ENCODE measurements at regions of chrX and their contacts with region 1.

Region 1: GRCh38 chrX:9995855-9996339 is 28.7 kb downstream of the CLDN34 start:
- DNase-seq: peak; percentile 35 to 87 (median 77)
- ATAC-seq: peak; percentile 84
- H3K4me3 ChIP-seq: no peak overlapping the region
- H3K4me3 Mint-ChIP-seq: no peak overlapping the region
- H3K27ac ChIP-seq: no peak overlapping the region
- H3K27ac Mint-ChIP-seq: no peak overlapping the region
- H3K4me1 ChIP-seq: no peaks in the 10 kb centered on the region
- H3K4me1 Mint-ChIP-seq: no peaks in the 10 kb centered on the region
- H3K27me3 ChIP-seq: no peaks in the 10 kb centered on the region
- H3K27me3 Mint-ChIP-seq: no peaks in the 10 kb centered on the region
- CTCF ChIP-seq: peak; percentile 92

Region 2: GRCh38 chrX:8743126-8743732 is 1252.7 kb before region 1 on chrX:
- CTCF ChIA-PET with region 1: no interaction called
- POLR2A ChIA-PET with region 1: no interaction called
- intact Hi-C with region 1: loop called in 1 of 2 experiments (anchors 5 kb)
- DNase-seq: peak; percentile 20 to 78 (median 59)
- ATAC-seq: peak; percentile 23
- H3K4me3 ChIP-seq: no peak overlapping the region
- H3K4me3 Mint-ChIP-seq: no peak overlapping the region
- H3K27ac ChIP-seq: no peak overlapping the region
- H3K27ac Mint-ChIP-seq: no peak overlapping the region
- H3K4me1 ChIP-seq: no peaks in the 10 kb centered on the region
- H3K4me1 Mint-ChIP-seq: no peaks in the 10 kb centered on the region
- H3K27me3 ChIP-seq: no peaks in the 10 kb centered on the region
- H3K27me3 Mint-ChIP-seq: peaks cover 9% of the 10 kb centered on the region
- CTCF ChIP-seq: peak; percentile 65

Region 3: GRCh38 chrX:9724713-9725112 is 271.2 kb before region 1 on chrX:
- CTCF ChIA-PET with region 1: no interaction called
- POLR2A ChIA-PET with region 1: no interaction called
- intact Hi-C with region 1: no loop called
- DNase-seq: no peak
- ATAC-seq: no peak
- H3K4me3 ChIP-seq: no peak overlapping the region
- H3K4me3 Mint-ChIP-seq: no peak overlapping the region
- H3K27ac ChIP-seq: no peak overlapping the region
- H3K27ac Mint-ChIP-seq: no peak overlapping the region
- H3K4me1 ChIP-seq: no peaks in the 10 kb centered on the region
- H3K4me1 Mint-ChIP-seq: no peaks in the 10 kb centered on the region
- H3K27me3 ChIP-seq: peaks cover 0 to 3% of the 10 kb centered on the region in 2 experiments
- H3K27me3 Mint-ChIP-seq: no peaks in the 10 kb centered on the region
- CTCF ChIP-seq: no peak

Region 4: DNA sequence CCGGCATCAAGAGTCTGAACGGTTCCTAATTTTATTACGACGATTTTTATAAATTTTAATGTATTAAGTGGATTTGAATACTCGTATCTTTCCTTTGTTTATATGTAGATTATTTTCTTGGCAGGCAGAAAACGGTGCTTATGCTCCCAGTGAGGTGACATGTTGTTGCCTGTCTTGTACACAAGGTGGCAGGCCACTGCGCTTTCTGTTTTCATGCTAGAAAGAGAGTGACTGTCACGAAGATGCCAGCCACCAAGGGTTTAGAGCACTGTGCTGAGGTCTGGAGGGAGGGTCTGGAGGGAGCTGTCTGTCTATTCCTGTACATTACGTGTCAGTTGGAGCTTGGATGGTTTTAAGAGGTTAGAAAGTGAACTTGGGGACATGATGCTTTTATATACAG is 121.9 kb before region 1 on chrX:
- CTCF ChIA-PET with region 1: no interaction called
- POLR2A ChIA-PET with region 1: no interaction called
- intact Hi-C with region 1: loop called (anchors 2 to 5 kb)
- DNase-seq: peak in 7 of 9 experiments; percentile 0 to 54 (median 17)
- ATAC-seq: peak; percentile 77
- H3K4me3 ChIP-seq: no peak overlapping the region
- H3K4me3 Mint-ChIP-seq: no peak overlapping the region
- H3K27ac ChIP-seq: no peak overlapping the region
- H3K27ac Mint-ChIP-seq: no peak overlapping the region
- H3K4me1 ChIP-seq: no peaks in the 10 kb centered on the region
- H3K4me1 Mint-ChIP-seq: peaks cover 13% of the 10 kb centered on the region
- H3K27me3 ChIP-seq: no peaks in the 10 kb centered on the region
- H3K27me3 Mint-ChIP-seq: peaks cover 11% of the 10 kb centered on the region
- CTCF ChIP-seq: peak; percentile 27

Region 5: DNA sequence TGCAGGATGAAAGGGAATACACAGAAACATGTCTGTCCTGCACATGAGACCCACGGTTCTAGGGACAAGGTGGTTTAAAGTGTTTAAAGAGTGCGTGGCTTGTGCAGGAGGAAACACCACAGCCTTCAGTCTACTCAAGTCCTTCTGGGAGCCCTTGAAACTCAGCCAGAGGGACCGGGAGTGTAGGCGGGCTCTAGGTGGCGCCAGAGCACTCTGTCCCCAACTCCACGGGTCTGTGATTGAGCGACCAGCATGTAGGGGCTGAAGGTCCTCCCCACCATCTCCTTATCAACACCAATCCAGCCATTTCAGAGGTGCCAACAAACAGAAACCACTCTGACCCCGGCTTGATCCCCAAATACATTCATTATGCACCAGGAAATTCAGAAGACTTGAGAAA is 110.7 kb before region 1 on chrX:
- CTCF ChIA-PET with region 1: no interaction called
- POLR2A ChIA-PET with region 1: no interaction called
- intact Hi-C with region 1: loop called (anchors 1 to 5 kb)
- DNase-seq: peak in 8 of 9 experiments; percentile 2 to 59 (median 33)
- ATAC-seq: no peak
- H3K4me3 ChIP-seq: no peak overlapping the region
- H3K4me3 Mint-ChIP-seq: no peak overlapping the region
- H3K27ac ChIP-seq: no peak overlapping the region
- H3K27ac Mint-ChIP-seq: no peak overlapping the region
- H3K4me1 ChIP-seq: no peaks in the 10 kb centered on the region
- H3K4me1 Mint-ChIP-seq: no peaks in the 10 kb centered on the region
- H3K27me3 ChIP-seq: no peaks in the 10 kb centered on the region
- H3K27me3 Mint-ChIP-seq: peaks cover 5% of the 10 kb centered on the region
- CTCF ChIP-seq: no peak

Region 6: DNA sequence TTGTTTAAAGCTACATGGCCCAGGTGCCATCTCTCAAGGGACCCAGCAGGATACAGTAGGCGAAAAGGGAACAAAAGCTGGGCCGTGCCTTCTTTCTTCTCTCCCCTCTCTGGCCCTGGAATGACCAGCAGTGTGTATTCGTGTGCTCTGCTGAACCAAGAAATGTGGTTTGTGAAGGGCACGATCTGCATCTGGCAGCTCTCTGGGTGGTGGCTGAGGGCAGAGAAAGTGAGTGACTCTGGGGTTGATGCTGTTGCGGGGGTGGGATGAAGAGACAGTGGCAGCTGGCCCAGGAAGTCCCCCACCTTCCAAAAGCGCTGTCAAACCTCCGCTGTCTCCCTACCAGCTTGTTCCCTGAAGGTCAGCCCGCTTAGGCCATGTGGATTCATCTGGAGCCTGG is 59.5 kb after region 1 on chrX:
- CTCF ChIA-PET with region 1: no interaction called
- POLR2A ChIA-PET with region 1: no interaction called
- intact Hi-C with region 1: no loop called
- DNase-seq: peak in 1 of 9 experiments; percentile 25
- ATAC-seq: no peak
- H3K4me3 ChIP-seq: no peak overlapping the region
- H3K4me3 Mint-ChIP-seq: no peak overlapping the region
- H3K27ac ChIP-seq: no peak overlapping the region
- H3K27ac Mint-ChIP-seq: no peak overlapping the region
- H3K4me1 ChIP-seq: no peaks in the 10 kb centered on the region
- H3K4me1 Mint-ChIP-seq: peaks cover 14% of the 10 kb centered on the region
- H3K27me3 ChIP-seq: no peaks in the 10 kb centered on the region
- H3K27me3 Mint-ChIP-seq: no peaks in the 10 kb centered on the region
- CTCF ChIP-seq: no peak

Region 7: DNA sequence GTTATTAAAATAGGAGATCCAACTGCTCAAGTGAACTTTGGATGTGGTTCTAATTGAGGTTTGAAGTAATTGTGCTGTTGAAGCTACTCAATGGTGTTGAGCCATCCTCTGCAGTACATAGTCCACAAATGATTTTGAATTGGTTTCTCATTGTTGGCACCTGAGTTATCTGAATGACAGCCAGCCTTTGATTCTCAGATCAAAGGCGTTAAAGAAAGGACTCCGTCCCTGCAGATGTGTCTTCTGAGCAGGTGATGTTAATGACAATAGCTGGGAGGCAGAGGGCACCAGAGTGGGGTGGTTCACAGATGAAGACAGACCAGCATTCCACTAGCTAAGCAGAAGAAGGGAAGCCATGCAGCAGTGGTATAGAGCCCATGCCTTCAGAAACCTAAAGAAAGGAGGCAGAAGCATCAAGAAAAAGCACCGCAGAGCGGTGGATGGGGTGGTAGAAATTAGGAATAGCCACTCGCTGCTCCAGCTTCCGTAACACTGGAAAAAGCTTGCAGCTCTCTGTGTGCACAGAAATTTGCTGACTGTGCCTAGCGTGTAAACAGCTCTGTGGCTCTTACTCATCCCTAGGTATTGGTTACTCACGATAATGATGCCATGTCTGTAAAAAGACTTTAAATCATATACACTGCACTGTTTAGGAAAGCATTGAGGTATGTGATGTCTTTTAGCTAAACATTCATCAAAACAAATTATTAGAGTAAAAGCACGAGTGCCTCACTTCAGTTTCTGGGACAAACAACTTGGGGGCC is 81.7 kb after region 1 on chrX:
- CTCF ChIA-PET with region 1: interaction called, 10 read pairs
- POLR2A ChIA-PET with region 1: no interaction called
- intact Hi-C with region 1: loop called (anchors 1 kb)
- DNase-seq: peak in 2 of 9 experiments; percentile 40 to 55
- ATAC-seq: peak; percentile 68
- H3K4me3 ChIP-seq: no peak overlapping the region
- H3K4me3 Mint-ChIP-seq: no peak overlapping the region
- H3K27ac ChIP-seq: no peak overlapping the region
- H3K27ac Mint-ChIP-seq: no peak overlapping the region
- H3K4me1 ChIP-seq: no peaks in the 10 kb centered on the region
- H3K4me1 Mint-ChIP-seq: peaks cover 8% of the 10 kb centered on the region
- H3K27me3 ChIP-seq: no peaks in the 10 kb centered on the region
- H3K27me3 Mint-ChIP-seq: no peaks in the 10 kb centered on the region
- CTCF ChIP-seq: no peak

Region 8: DNA sequence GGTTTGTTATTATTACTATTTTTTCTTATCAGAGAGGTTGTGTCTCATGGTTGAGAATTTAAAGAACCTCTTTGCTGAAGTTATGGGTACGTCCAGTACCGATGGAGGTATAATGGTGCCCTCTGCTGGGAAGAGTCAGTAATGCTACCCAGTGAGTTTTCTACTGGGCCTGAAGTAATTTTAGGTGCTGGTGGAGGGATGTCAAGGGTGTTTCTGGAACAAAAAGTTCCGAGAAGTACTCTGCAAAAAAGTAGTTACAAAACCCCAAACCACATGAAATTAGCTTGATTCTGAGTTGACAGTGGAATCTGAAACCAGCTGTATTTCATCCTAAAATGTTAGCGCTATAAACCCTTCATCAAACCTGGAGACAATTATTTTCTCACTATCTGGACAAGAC is 727.0 kb after region 1 on chrX:
- CTCF ChIA-PET with region 1: no interaction called
- POLR2A ChIA-PET with region 1: no interaction called
- intact Hi-C with region 1: no loop called
- DNase-seq: peak in 5 of 9 experiments; percentile 0 to 32 (median 18)
- ATAC-seq: no peak
- H3K4me3 ChIP-seq: no peak overlapping the region
- H3K4me3 Mint-ChIP-seq: no peak overlapping the region
- H3K27ac ChIP-seq: no peak overlapping the region
- H3K27ac Mint-ChIP-seq: no peak overlapping the region
- H3K4me1 ChIP-seq: no peaks in the 10 kb centered on the region
- H3K4me1 Mint-ChIP-seq: no peaks in the 10 kb centered on the region
- H3K27me3 ChIP-seq: no peaks in the 10 kb centered on the region
- H3K27me3 Mint-ChIP-seq: no peaks in the 10 kb centered on the region
- CTCF ChIP-seq: peak; percentile 38